AG04450 (cell line): ENCODE measurements at regions of chr2 and their contacts with region 1.

Region 1: GRCh38 chr2:223970343-223971128 is 13.3 kb downstream of the MRPL44 start:
- DNase-seq: no peak
- H3K4me3 ChIP-seq: no peak overlapping the region
- H3K27ac ChIP-seq: no peak overlapping the region
- H3K27me3 ChIP-seq: no peaks in the 10 kb centered on the region
- CTCF ChIP-seq: peak; percentile 93

Region 2: DNA sequence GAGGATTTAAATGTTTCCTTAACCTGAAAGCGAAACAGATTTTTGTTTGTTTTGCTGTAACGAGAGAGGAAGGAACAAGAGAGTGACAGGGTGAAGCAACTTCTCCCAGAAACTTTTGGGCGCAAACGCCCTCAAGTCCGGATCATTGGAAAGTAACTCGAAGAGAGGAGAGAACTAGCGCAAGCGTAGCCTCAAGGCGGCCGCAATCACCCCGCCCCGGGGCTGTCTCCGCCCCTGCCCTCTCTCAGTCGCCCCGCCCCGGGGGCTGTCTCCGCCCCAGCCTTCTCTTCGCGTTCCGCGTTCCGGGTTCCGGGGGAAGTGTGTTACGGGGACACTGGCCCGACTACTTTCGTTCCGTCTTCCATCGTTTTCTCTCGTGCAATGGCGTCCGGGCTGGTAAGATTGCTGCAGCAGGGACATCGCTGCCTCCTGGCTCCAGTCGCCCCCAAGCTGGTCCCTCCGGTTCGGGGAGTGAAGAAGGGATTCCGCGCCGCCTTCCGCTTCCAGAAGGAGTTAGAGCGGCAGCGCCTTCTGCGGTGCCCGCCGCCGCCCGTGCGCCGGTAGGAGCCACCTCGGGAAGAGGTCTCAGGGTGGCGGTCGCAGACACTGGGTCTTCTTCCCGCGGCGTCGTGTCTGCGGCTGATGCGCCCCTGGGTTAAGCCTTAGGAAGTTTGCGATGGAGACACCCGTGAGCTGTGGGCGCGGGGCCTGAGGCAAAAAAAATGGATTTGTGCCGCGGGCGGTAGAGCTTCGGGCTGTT is 13.3 kb before region 1 on chr2 and contains the start of gene MRPL44:
- CTCF ChIA-PET with region 1: interaction called, 36 read pairs
- POLR2A ChIA-PET with region 1: no interaction called
- DNase-seq: peak; percentile 85
- H3K4me3 ChIP-seq: peak within 1 kb of the TSS; percentile 85
- H3K27ac ChIP-seq: peak within 1 kb of the TSS; percentile 57
- H3K27me3 ChIP-seq: no peaks in the 10 kb centered on the region
- CTCF ChIP-seq: no peak
- polyA plus RNA-seq, gene MRPL44: 22.0 and 24.3 TPM in 2 replicates

Region 3: GRCh38 chr2:224284134-224284946 is 313.8 kb after region 1 on chr2:
- CTCF ChIA-PET with region 1: interaction called, 309 read pairs
- POLR2A ChIA-PET with region 1: no interaction called
- DNase-seq: no peak
- H3K4me3 ChIP-seq: no peak overlapping the region
- H3K27ac ChIP-seq: no peak overlapping the region
- H3K27me3 ChIP-seq: peaks cover 11% of the 10 kb centered on the region
- CTCF ChIP-seq: peak; percentile 52

Region 4: DNA sequence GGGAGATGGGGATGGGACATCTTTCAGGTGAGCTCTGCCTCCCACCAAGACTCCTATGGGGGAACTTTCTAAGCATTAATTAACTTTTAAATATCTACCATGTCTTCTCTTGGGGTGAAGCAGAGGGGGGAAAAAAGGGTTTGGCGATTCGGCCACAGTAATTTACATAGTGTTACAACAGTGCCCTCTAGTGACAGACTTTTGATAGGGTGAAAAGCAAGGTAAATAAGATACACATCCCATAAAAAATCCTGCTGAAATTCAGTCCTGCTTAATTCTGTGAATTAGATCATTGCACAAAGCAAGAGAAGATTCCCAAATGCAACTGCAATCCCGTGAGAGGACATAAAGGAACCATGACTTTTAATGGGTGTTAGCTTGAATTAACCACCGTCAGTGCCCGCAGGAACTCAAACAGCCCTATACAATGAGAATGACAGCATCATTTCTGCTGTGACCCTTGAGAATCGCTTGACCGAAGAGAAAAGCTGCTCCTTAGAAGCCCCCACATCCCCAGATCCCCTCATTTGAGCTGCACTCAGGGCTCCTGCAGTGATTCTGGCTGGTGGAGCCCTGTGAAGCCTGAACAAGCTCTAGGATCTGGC is 398.6 kb after region 1 on chr2:
- CTCF ChIA-PET with region 1: interaction called, 55 read pairs
- POLR2A ChIA-PET with region 1: no interaction called
- DNase-seq: no peak
- H3K4me3 ChIP-seq: no peak overlapping the region
- H3K27ac ChIP-seq: no peak overlapping the region
- H3K27me3 ChIP-seq: no peaks in the 10 kb centered on the region
- CTCF ChIP-seq: peak; percentile 71

Region 5: DNA sequence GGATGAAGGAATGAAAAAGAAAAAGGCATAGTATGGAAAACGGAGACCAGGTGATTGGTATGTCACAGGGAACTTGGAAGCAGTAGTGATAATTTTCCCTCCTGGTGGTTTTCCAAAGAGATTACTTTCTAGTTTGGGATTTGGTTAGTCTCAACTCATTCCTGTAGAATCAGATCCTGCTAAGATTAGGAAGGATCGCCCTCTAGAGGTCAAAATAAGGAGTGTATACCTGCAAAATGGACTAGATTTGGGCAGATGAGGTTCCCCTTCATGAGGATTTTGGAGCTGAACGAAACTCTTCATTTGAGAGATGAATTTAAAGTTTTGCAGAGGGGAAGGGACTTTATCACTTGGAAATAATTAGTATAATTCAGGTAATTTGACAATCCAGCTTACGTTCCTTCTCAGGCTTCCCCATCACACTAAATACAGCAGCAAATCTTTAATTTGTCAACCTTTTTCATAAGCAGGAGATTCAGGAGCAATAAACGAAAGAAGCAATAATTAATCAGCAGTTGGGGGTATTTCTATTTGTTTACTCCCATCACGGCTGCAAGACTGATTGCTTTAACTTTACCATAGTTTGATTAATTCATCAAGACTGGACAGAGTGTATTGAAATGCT is 680.4 kb after region 1 on chr2:
- CTCF ChIA-PET with region 1: interaction called, 13 read pairs
- POLR2A ChIA-PET with region 1: no interaction called
- DNase-seq: peak; percentile 11
- H3K4me3 ChIP-seq: no peak overlapping the region
- H3K27ac ChIP-seq: no peak overlapping the region
- H3K27me3 ChIP-seq: peaks cover 3% of the 10 kb centered on the region
- CTCF ChIP-seq: peak; percentile 84